ENCODE measurements at regions of chr1 and their contacts with region 1.

Region 1: DNA sequence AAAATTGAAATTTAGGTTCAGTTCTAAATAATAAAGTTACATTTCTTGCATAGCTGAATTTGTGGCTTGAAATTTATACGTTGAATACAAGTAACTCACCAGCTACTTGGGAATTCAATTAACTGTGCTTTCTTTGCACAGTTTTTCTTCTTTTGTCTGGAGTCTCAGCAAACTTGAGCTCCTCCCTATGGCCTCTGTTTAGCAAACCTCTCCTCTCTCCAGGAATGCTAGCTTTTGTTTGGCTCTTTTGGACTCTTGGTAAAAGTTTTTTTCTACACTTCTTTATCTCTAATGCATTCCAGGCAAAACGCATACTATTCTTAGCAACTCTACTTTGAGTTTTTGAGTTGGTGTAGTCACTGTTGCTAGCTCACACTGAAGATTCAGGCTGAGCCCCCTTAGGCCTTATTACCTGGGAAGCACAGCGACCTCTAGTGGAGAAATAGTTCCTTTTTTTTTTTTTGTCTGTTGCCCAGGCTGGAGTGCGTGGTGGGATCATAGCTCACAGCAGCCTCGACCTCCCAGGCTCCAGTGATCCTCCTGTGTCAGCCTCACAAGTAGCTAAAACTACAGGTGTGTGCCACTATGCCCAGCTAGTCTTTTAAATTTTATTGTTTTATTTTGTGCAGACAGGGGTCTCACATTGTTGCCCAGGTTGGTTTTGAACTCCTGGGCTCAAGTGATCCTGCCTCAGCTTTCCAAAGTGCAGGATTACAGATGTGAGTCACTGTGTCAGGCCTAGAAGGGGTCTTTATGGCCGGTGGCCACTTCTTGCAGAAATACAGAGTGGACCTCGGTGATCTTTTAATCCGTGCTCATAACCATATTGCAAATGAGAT is 61.7 kb downstream of the CASQ2 start:
- DNase-seq: no peak
- ATAC-seq: peak; percentile 23
- H3K4me3 Mint-ChIP-seq: no peak overlapping the region
- H3K27ac Mint-ChIP-seq: no peak overlapping the region
- H3K4me1 Mint-ChIP-seq: no peaks in the 10 kb centered on the region
- H3K27me3 Mint-ChIP-seq: peaks cover 13% of the 10 kb centered on the region

Region 2: DNA sequence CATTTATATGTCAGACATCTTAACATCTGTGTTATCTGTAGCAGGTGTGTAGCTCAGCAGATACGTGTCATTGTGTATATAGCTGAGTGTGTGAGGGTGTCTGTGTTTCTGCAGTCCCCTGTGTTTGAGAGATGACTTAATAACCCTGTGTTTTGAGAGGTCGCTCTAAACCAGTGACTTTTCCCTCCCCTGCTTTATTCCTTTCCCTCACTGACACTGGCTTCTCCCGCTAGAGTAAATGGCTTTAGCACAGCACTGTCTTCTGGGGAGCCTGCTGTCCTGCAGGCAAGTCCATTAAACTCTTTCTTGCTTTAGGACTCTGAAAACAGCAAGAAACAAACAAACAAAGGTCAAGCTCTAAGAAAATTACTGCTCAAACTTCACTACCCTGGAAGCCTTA is 12.0 kb before region 1 on chr1:
- CTCF ChIA-PET with region 1: interaction called, 12 read pairs
- POLR2A ChIA-PET with region 1: no interaction called
- intact Hi-C with region 1: no loop called
- DNase-seq: no peak
- ATAC-seq: no peak
- H3K4me3 Mint-ChIP-seq: no peak overlapping the region
- H3K27ac Mint-ChIP-seq: no peak overlapping the region
- H3K4me1 Mint-ChIP-seq: no peaks in the 10 kb centered on the region
- H3K27me3 Mint-ChIP-seq: peaks cover 2% of the 10 kb centered on the region